Caco-2 (cell line): ENCODE measurements at regions of chr2 and their contacts with region 1.

Region 1: GRCh38 chr2:62410015-62410453 is 96.0 kb downstream of the TMEM17 start:
- DNase-seq: peak in 1 of 2 experiments; percentile 28
- H3K4me3 ChIP-seq: no peak overlapping the region
- H3K4me3 Mint-ChIP-seq: no peak overlapping the region
- H3K27ac Mint-ChIP-seq: peak overlapping the region; percentile 84
- H3K4me1 ChIP-seq: peaks cover 50% of the 10 kb centered on the region
- H3K4me1 Mint-ChIP-seq: peaks cover 58% of the 10 kb centered on the region
- H3K27me3 ChIP-seq: no peaks in the 10 kb centered on the region
- H3K27me3 Mint-ChIP-seq: no peaks in the 10 kb centered on the region
- CTCF ChIP-seq: no peak

Region 2: GRCh38 chr2:61922714-61923113 is 487.3 kb before region 1 on chr2:
- CTCF ChIA-PET with region 1: no interaction called
- POLR2A ChIA-PET with region 1: no interaction called
- intact Hi-C with region 1: loop called (anchors 1 kb)
- DNase-seq: no peak
- H3K4me3 ChIP-seq: no peak overlapping the region
- H3K4me3 Mint-ChIP-seq: no peak overlapping the region
- H3K27ac Mint-ChIP-seq: no peak overlapping the region
- H3K4me1 ChIP-seq: peaks cover 22% of the 10 kb centered on the region
- H3K4me1 Mint-ChIP-seq: peaks cover 13% of the 10 kb centered on the region
- H3K27me3 ChIP-seq: no peaks in the 10 kb centered on the region
- H3K27me3 Mint-ChIP-seq: no peaks in the 10 kb centered on the region
- CTCF ChIP-seq: no peak

Region 3: DNA sequence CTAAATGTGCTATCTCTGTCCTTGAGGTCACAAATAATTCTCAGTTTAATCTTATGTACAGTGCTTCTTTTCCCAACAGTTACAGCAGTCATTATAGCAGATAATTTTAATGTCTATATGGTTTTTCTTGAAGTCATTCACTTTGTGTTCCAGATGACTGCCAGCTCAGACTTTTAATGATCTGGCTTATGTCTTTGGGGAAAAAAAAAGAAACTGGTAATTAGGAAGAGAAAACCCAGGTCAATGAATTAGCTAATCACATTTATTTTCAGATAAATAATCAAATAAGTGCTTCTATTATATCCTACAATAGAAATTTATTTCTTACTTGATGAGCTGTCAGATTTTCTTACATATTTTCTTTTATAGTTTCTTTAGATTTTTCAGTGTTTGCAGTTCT is 408.6 kb before region 1 on chr2:
- CTCF ChIA-PET with region 1: no interaction called
- POLR2A ChIA-PET with region 1: no interaction called
- intact Hi-C with region 1: no loop called
- DNase-seq: no peak
- H3K4me3 ChIP-seq: no peak overlapping the region
- H3K4me3 Mint-ChIP-seq: no peak overlapping the region
- H3K27ac Mint-ChIP-seq: no peak overlapping the region
- H3K4me1 ChIP-seq: no peaks in the 10 kb centered on the region
- H3K4me1 Mint-ChIP-seq: peaks cover 7% of the 10 kb centered on the region
- H3K27me3 ChIP-seq: no peaks in the 10 kb centered on the region
- H3K27me3 Mint-ChIP-seq: no peaks in the 10 kb centered on the region
- CTCF ChIP-seq: no peak

Region 4: GRCh38 chr2:62149708-62150107 is 260.3 kb before region 1 on chr2:
- CTCF ChIA-PET with region 1: no interaction called
- POLR2A ChIA-PET with region 1: no interaction called
- intact Hi-C with region 1: loop called (anchors 5 kb)
- DNase-seq: no peak
- H3K4me3 ChIP-seq: no peak overlapping the region
- H3K4me3 Mint-ChIP-seq: no peak overlapping the region
- H3K27ac Mint-ChIP-seq: no peak overlapping the region
- H3K4me1 ChIP-seq: no peaks in the 10 kb centered on the region
- H3K4me1 Mint-ChIP-seq: peaks cover 10% of the 10 kb centered on the region
- H3K27me3 ChIP-seq: no peaks in the 10 kb centered on the region
- H3K27me3 Mint-ChIP-seq: no peaks in the 10 kb centered on the region
- CTCF ChIP-seq: no peak

Region 5: GRCh38 chr2:62227386-62228075 is 182.5 kb before region 1 on chr2:
- CTCF ChIA-PET with region 1: interaction called, 6 read pairs
- POLR2A ChIA-PET with region 1: no interaction called
- intact Hi-C with region 1: loop called (anchors 5 kb)
- DNase-seq: no peak
- H3K4me3 ChIP-seq: no peak overlapping the region
- H3K4me3 Mint-ChIP-seq: no peak overlapping the region
- H3K27ac Mint-ChIP-seq: no peak overlapping the region
- H3K4me1 ChIP-seq: peaks cover 18% of the 10 kb centered on the region
- H3K4me1 Mint-ChIP-seq: peaks cover 15% of the 10 kb centered on the region
- H3K27me3 ChIP-seq: no peaks in the 10 kb centered on the region
- H3K27me3 Mint-ChIP-seq: no peaks in the 10 kb centered on the region
- CTCF ChIP-seq: no peak

Region 6: DNA sequence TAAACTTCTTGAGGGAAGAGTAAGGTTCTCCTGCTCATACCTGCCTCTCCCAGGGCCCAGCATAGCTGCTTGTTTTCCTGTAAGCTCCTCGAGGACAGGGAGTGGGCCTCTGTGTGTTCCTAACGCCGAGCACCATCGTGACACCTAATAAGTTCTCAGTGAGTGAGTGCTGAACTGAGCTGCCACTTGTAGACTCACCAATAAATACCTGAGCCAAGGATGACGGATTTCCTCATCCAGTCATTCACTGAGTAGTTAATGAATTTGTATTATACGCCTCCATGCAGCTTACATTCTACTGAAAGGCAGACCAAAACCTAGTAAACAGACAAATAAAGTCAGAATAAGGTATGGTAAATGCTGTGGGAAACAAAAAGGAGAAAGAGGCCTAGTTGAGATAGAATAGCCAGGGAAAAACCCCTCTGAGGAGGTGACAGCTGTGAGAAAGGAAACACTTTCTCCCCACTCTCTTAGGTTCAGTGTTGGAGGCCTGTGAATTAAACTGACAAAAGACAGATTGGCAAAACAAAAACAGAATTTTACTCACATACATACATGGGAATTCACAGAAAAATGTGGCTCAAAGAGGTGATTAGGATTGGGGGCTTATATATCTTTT is 75.5 kb before region 1 on chr2:
- CTCF ChIA-PET with region 1: interaction called, 3 read pairs
- POLR2A ChIA-PET with region 1: no interaction called
- intact Hi-C with region 1: loop called (anchors 2 kb)
- DNase-seq: no peak
- H3K4me3 ChIP-seq: no peak overlapping the region
- H3K4me3 Mint-ChIP-seq: no peak overlapping the region
- H3K27ac Mint-ChIP-seq: peak overlapping the region; percentile 53
- H3K4me1 ChIP-seq: peaks cover 49% of the 10 kb centered on the region
- H3K4me1 Mint-ChIP-seq: peaks cover 49% of the 10 kb centered on the region
- H3K27me3 ChIP-seq: no peaks in the 10 kb centered on the region
- H3K27me3 Mint-ChIP-seq: no peaks in the 10 kb centered on the region
- CTCF ChIP-seq: no peak

Region 7: DNA sequence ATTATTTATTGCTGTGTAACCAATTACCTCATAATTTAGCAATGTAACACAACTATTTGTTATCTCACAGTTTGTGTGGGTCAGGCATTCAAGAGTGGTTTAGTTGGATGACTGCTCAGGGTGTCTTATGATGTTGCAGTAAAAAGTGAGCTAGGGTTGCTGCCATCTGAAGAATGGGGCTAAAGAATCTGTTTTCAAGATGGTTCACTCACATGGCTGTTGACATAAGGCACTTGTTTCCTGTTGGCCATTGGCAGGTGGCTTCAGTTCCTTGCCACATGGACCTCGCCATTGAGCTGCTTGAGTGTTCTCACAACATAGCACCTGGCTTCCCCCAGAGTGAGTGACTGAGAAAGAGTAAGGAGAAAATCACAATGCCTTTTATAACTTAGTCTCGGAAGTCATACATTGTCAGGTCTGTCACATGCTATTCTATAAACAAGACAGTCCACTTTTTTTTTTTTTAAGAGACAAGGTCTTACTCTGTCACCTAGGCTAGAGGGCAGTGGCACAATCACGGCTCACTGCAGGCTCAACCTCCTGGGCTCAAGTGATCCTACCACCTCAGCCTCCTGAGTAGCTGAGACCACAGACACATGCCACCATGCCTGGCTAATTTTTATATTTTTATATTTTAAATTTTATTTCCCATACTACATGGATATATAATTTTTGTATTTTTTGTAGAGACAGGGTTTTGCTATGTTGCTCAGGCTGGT is 27.1 kb before region 1 on chr2:
- CTCF ChIA-PET with region 1: interaction called, 3 read pairs
- POLR2A ChIA-PET with region 1: no interaction called
- intact Hi-C with region 1: loop called (anchors 1 kb)
- DNase-seq: no peak
- H3K4me3 ChIP-seq: no peak overlapping the region
- H3K4me3 Mint-ChIP-seq: no peak overlapping the region
- H3K27ac Mint-ChIP-seq: peak overlapping the region; percentile 36
- H3K4me1 ChIP-seq: peaks cover 21% of the 10 kb centered on the region
- H3K4me1 Mint-ChIP-seq: peaks cover 11% of the 10 kb centered on the region
- H3K27me3 ChIP-seq: no peaks in the 10 kb centered on the region
- H3K27me3 Mint-ChIP-seq: no peaks in the 10 kb centered on the region
- CTCF ChIP-seq: no peak